IMR-90 (cell line): ENCODE measurements at regions of chr2 and their contacts with region 1.

Region 1: GRCh38 chr2:223459328-223459939 is 142.7 kb downstream of the SCG2 start:
- DNase-seq: peak; percentile 44
- ATAC-seq: no peak
- H3K4me3 ChIP-seq: no peak overlapping the region
- H3K27ac ChIP-seq: no peak overlapping the region
- H3K4me1 ChIP-seq: peaks cover 3% of the 10 kb centered on the region
- H3K27me3 ChIP-seq: no peaks in the 10 kb centered on the region
- CTCF ChIP-seq: peak; percentile 53
- POLR2A ChIP-seq: no peak
- RAD21 ChIP-seq: peak; percentile 43

Region 2: DNA sequence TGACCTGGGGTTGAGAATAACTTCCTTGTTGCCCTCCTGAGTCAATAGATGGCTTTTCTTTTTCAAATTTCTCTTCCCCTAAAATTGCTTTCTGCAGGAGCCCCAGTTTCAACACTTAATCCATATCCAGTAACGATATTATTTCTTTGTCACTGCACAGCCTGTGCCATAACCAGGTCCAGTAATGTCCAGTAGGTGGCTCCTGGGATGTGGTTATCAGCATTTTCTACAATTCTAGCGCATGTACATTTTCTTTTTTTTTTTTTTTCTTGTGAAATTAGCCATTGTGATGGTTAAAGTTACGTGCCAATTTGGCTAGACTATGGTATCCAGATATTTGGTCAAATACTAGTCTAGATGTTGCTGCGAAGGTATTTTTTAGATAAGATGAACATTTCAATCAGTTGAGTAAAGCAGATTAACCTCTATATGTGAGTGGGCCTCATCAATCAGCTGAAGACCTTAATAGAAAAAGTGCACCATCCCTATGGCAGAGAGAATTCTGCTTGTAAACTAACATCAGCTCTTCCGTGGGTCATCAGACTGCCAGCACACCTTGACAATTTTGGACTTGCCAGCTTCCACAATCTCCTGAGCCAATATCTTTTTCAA is 215.7 kb after region 1 on chr2:
- CTCF ChIA-PET with region 1: no interaction called
- POLR2A ChIA-PET with region 1: no interaction called
- dilution Hi-C with region 1: no loop called
- in situ Hi-C with region 1: no loop called
- intact Hi-C with region 1: loop called (anchors 5 kb)
- DNase-seq: peak; percentile 54
- ATAC-seq: peak; percentile 80
- H3K4me3 ChIP-seq: no peak overlapping the region
- H3K27ac ChIP-seq: no peak overlapping the region
- H3K4me1 ChIP-seq: no peaks in the 10 kb centered on the region
- H3K27me3 ChIP-seq: no peaks in the 10 kb centered on the region
- CTCF ChIP-seq: peak; percentile 71
- POLR2A ChIP-seq: no peak
- RAD21 ChIP-seq: peak; percentile 63

Region 3: DNA sequence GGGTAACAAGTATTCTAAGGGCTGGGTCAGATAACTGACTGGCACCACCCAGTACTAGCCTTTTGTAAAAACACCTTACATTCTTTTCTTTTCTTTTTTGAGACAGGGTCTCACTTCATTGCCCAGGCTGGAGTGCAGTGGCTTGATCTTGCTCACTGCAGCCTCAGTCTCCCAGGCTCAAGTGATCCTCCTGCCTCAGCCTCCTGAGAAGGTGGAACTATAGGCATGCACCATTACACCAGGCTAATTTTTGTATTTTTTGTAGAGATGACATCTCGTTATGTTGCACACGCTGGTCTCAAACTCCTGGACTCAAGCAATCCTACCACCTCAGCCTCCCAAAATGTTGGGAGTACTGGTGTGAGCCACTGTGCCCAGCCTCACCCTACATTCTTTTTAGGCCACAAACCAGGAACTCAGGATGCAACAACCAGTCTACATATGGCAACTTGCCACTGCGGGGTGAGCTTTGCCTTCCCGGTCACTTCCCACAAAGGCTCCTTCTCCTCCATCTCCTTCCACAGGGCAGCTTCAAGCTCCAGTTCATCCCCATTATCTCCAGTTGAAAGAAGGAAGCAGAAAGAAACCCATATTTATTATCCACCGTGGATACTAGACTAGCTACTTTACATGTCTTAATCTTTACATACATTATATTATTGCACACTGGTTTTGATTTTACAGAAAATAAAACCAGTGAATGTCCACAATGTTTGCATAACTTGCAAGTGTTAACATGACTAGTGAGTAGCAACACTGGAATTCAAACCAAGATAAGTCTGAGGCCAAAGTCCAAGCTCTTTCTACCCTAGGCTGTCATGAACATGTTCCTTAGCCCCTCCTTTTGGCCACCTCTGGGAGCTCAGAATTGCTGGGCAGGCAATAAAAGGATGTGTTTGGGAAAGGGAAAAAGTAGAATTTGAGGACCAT is 401.6 kb after region 1 on chr2:
- CTCF ChIA-PET with region 1: no interaction called
- POLR2A ChIA-PET with region 1: no interaction called
- dilution Hi-C with region 1: no loop called
- in situ Hi-C with region 1: no loop called
- intact Hi-C with region 1: loop called (anchors 5 kb)
- DNase-seq: peak; percentile 77
- ATAC-seq: peak; percentile 87
- H3K4me3 ChIP-seq: no peak overlapping the region
- H3K27ac ChIP-seq: peak overlapping the region; percentile 57; the same call in 1 of the 2 replicates
- H3K4me1 ChIP-seq: peaks cover 8% of the 10 kb centered on the region
- H3K27me3 ChIP-seq: no peaks in the 10 kb centered on the region
- CTCF ChIP-seq: no peak
- POLR2A ChIP-seq: no peak
- RAD21 ChIP-seq: no peak